ENCODE measurements at regions of chr4 and their contacts with region 1.

Region 1: DNA sequence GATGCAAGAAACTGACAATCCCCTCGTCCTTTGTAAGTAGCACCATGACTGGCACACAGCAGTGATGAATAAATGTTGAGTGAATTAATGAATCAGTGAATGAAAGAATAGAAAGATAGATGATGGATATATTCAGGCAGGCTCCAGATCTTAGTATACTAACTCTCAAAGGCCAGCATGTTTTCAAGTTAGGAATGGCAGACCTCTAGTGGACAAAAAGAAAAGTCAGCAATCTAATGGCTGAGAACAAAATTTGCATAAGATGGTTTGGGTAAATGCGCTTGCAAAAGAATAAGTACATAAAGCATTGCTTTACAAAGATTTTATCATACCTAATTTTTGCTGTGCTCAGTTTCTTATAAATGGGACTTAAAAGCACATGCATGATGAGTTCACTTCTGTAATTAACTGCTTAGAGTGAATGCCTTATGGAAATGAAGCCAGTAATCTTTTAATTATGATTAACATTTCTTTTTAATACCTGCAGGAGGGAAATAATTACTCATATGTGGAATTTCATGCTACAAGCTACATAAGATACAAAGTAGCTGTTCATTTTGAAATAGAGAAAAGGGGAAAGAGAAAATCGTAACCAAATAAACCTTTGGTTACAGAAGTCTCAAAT is 126.9 kb upstream of the GPRIN3 start:
- DNase-seq: peak in 4 of 5 donors; percentile 48 to 58 (median 55)
- H3K4me3 ChIP-seq: no peak overlapping the region
- H3K4me3 Mint-ChIP-seq: no peak overlapping the region
- H3K27ac ChIP-seq: no peak overlapping the region
- H3K27ac Mint-ChIP-seq: no peak overlapping the region
- H3K4me1 ChIP-seq: peaks cover 16% of the 10 kb centered on the region
- H3K4me1 Mint-ChIP-seq: peaks cover 13 to 16% (median 14%) of the 10 kb centered on the region in 4 donors
- H3K27me3 ChIP-seq: no peaks in the 10 kb centered on the region
- H3K27me3 Mint-ChIP-seq: peaks cover 0 to 3% of the 10 kb centered on the region in 2 donors

Region 2: DNA sequence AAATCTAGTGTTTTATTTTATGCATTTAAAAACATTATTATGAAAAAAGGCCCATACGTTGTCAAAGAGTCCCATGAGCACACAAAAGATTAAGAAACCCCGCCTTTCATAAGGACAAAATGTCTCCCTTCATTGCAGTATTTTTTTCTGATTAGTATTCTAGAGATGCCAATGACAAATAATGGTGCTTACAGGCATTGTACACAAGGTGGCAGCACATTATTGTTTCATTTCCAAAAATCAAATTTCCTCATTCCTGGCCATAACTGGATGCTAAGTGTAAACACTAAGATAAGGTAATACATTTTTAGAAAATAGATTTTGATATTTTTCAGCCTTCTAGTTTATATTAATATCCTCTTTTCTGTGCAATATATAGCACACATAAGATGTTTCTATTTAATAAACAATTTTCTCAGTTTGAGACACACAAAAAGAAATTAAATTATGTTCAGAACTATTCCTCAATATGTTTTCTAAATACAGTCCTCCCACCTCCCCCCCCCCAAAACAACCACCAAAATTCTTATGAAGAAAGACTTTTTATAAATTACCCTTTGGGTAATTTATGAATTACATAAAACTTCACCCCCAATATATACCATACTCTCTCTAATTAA is 275.5 kb before region 1 on chr4:
- CTCF ChIA-PET with region 1: interaction called, 10 read pairs
- POLR2A ChIA-PET with region 1: no interaction called
- intact Hi-C with region 1: loop called (anchors 1 kb)
- DNase-seq: peak in 4 of 5 donors; percentile 22 to 39 (median 34)
- H3K4me3 ChIP-seq: no peak overlapping the region
- H3K4me3 Mint-ChIP-seq: no peak overlapping the region
- H3K27ac ChIP-seq: no peak overlapping the region
- H3K27ac Mint-ChIP-seq: no peak overlapping the region
- H3K4me1 ChIP-seq: no peaks in the 10 kb centered on the region
- H3K4me1 Mint-ChIP-seq: peaks cover 0 to 2% (median 0%) of the 10 kb centered on the region in 4 donors
- H3K27me3 ChIP-seq: no peaks in the 10 kb centered on the region
- H3K27me3 Mint-ChIP-seq: peaks cover 0 to 1% of the 10 kb centered on the region in 2 donors

Region 3: GRCh38 chr4:89164400-89164799 is 270.1 kb before region 1 on chr4:
- CTCF ChIA-PET with region 1: interaction called, 10 read pairs
- POLR2A ChIA-PET with region 1: no interaction called
- intact Hi-C with region 1: loop called (anchors 1 kb)
- DNase-seq: no peak
- H3K4me3 ChIP-seq: no peak overlapping the region
- H3K4me3 Mint-ChIP-seq: no peak overlapping the region
- H3K27ac ChIP-seq: no peak overlapping the region
- H3K27ac Mint-ChIP-seq: no peak overlapping the region
- H3K4me1 ChIP-seq: no peaks in the 10 kb centered on the region
- H3K4me1 Mint-ChIP-seq: no peaks in the 10 kb centered on the region
- H3K27me3 ChIP-seq: no peaks in the 10 kb centered on the region
- H3K27me3 Mint-ChIP-seq: peaks cover 3 to 4% of the 10 kb centered on the region in 2 donors

Region 4: GRCh38 chr4:90293320-90293719 is 858.8 kb after region 1 on chr4:
- CTCF ChIA-PET with region 1: no interaction called
- POLR2A ChIA-PET with region 1: no interaction called
- intact Hi-C with region 1: loop called (anchors 5 kb)
- DNase-seq: no peak
- H3K4me3 ChIP-seq: no peak overlapping the region
- H3K4me3 Mint-ChIP-seq: no peak overlapping the region
- H3K27ac ChIP-seq: no peak overlapping the region
- H3K27ac Mint-ChIP-seq: no peak overlapping the region
- H3K4me1 ChIP-seq: no peaks in the 10 kb centered on the region
- H3K4me1 Mint-ChIP-seq: no peaks in the 10 kb centered on the region
- H3K27me3 ChIP-seq: no peaks in the 10 kb centered on the region
- H3K27me3 Mint-ChIP-seq: peaks cover 0 to 3% of the 10 kb centered on the region in 2 donors